HEK293 (cell line): ENCODE measurements at regions of chr5 and their contacts with region 1.

Region 1: DNA sequence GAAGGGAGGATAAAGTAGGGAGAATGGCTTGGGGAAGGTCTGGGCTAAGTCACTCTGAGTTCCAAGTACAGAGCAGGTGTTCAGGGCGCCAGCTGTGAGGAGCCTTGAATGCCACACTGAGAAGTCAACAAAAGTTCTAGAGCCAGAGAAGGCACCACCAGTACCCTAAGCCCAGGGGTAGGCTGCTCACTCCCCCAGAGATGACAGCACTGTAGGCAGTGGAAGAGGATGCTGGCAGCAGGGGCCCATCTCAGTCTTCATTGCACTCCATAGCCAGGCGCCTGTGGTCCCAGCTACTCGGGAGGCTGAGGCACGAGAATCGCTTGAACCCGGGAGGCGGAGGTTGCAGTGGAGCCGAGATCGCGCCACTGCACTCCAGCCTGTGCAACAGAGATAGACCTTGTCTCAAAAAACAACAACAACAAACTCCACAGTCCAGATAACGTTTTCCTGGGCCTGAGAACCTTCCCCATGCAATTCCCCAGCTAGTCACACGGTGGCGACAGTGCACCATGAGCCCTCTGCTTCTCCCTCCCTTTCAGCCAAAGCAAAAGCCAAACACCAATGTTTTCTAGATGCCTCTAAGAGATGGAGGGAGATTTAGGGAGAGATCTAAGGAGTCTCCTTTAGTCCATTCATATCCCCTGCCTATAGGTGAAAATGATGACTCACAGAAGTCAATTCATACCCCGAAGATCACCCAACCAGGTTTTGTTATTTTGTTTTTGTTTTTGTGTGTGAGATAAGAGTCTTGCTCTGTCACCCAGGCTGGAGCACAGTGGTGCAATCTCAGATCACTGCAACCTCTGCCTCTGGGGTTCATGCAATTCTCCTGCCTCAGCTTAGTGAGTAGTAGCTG is 19.8 kb upstream of the NSD1 start:
- H3K4me3 ChIP-seq: no peak overlapping the region
- H3K27ac ChIP-seq: no peak overlapping the region
- H3K4me1 ChIP-seq: no peaks in the 10 kb centered on the region
- CTCF ChIP-seq: peak; percentile 98

Region 2: DNA sequence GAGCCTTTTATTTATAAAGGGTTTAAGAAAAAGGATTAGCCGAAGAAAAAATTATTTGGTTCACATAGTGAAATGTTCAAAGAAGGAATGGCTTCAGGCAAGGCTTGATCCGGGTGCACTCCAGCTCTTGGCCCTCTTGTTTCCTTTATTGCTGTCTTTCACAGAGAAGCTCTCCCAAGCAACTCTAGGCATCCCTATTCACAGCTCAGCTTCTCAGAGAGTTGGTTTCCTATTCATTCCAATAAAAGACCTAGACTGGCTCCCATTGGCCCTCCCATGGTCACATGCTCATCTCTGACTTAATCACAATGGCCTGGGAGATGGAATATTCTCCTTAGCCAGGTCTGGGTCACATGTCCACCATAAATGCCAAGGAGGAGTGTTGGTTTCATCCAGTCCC is 36.5 kb before region 1 on chr5:
- CTCF ChIA-PET with region 1: interaction called, 151 read pairs
- POLR2A ChIA-PET with region 1: no interaction called
- H3K4me3 ChIP-seq: no peak overlapping the region
- H3K27ac ChIP-seq: no peak overlapping the region
- H3K4me1 ChIP-seq: no peaks in the 10 kb centered on the region
- CTCF ChIP-seq: no peak

Region 3: DNA sequence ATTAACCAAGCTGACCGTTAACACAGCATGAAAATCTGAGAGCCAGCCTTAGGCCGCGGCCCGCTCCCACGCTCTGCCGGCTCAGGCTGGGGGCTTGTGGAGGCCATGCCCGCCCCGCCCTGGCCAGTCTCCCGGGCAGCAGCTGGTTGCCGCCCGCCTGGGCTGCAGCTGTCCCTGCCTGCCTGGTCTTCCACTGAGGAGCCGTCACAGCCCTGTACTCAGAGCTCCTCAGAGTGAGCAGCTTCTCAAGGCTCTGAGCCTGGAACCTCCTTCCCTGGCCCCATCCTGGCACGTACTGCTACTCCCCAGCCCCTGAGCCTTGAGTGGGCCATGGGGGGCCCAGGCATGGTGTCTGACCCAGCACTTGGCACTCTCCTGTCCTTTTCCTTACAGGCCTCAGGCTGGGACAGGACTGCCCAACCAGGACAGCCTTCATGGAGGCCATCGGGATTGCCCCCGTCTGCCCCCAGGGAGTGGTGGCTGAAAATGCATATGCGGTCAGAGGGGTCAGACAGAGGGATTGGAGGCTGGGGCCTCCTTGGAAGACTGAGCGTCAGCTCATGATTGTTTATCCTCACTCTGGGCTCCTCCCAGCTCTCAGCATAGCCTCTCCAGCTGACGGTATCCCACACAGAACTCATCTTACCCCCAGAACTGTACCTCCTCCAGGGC is 15.2 kb before region 1 on chr5:
- CTCF ChIA-PET with region 1: interaction called, 12 read pairs
- POLR2A ChIA-PET with region 1: no interaction called
- H3K4me3 ChIP-seq: no peak overlapping the region
- H3K27ac ChIP-seq: no peak overlapping the region
- H3K4me1 ChIP-seq: no peaks in the 10 kb centered on the region
- CTCF ChIP-seq: no peak

Region 4: DNA sequence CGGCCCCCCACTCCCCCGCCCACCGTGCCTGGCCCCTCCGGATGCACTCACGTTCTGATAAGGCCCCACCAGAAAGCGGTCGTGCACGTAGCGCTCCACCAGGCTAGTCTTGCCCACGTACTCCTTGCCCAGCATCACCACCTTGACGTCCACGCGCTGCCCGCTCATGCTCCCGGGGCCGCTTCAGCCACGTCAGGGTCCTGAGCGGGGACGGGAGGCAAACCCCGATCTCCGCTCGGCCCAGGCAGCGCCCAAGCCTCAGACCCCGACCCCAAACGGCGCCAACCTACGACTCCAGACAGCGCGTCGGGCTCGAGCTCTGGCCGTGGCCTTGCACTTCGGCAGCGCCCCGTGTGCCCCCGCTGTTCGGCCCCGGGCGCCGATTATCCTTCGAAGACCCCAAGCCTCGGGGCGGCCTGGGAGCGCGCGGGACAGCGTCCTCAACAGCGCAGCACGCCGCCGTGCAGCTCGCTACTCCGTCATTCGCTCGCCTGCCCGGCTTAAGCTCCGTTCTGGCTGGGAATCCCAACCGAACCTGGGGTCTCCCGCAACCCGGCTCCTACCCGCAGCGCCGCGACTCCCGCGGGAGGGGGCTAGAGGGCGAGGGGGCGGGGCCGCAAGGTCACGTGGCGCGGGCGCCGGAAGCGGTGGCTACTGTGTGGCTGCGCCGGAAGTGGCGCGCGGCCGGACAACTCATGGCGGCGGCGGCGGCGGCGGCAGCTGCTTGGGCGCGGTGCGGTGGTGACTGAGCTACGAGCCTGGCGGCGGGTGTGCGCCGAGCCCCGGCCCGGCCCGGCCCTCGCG is 189.5 kb after region 1 on chr5 and contains the starts of genes PRELID1 and RAB24:
- CTCF ChIA-PET with region 1: interaction called, 16 read pairs
- POLR2A ChIA-PET with region 1: no interaction called
- H3K4me3 ChIP-seq: peak within 1 kb of the TSS; percentile 90
- H3K27ac ChIP-seq: peak within 1 kb of the TSS; percentile 80
- H3K4me1 ChIP-seq: peaks cover 9% of the 10 kb centered on the region
- CTCF ChIP-seq: peak; percentile 91